Posterior cingulate gyrus (tissue), 11 donors: ENCODE measurements at regions of chr1 and their contacts with region 1.

Region 1: GRCh38 chr1:2314803-2315673 is 76.3 kb downstream of the MORN1 start:
- DNase-seq: peak in 1 of 10 donors; percentile 35

Region 2: GRCh38 chr1:2194898-2195673 is 120.0 kb before region 1 on chr1:
- intact Hi-C with region 1: loop called (anchors 10 kb)
- DNase-seq: peak; percentile 72 to 98 (median 82)

Region 3: DNA sequence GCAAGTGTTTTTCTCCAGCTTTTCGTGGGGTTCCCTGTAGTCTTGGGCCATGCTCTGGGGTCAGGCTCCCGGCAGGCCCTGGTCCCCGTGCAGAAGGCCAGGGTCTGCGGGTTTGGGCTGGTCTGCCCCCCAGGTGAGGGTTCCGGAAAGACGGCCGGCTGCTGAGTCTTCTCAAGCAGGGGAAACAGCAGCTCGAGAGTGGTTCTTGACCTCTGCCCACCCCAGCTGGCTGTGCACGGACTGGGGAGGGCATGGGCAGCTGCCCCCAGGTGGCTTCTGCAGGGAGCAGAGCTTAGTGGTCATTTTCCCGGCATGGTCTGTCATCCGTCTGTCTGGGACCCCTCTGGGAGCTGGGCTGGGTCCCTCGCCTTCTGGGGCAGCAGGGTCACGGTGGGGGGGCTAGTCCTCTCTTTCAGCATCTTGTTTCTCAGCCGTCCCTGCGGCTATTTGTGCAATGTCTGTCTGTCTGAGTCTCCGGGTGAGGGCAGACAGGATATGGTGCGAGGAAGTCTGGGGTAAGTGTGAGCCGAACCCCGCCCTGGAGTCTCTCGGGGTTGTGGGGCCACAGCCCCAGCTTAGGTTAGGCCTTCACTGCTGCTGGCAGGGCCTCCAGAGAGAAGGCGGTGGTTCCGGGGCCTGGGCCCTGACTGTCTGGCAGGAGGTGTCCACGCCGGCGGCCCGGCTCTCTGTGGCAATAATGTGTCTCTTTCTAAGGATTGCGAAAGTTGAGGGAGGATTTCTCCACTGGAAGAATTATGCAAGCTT is 80.9 kb before region 1 on chr1:
- intact Hi-C with region 1: loop called (anchors 5 kb)
- DNase-seq: peak in 8 of 10 donors; percentile 49 to 94 (median 70)